ENCODE measurements at regions of chr3 and their contacts with region 1.

Region 1: GRCh38 chr3:167497903-167498302 is 24.1 kb upstream of the SERPINI2 start:
- DNase-seq: no peak
- ATAC-seq: no peak
- H3K4me3 ChIP-seq: no peak overlapping the region
- H3K27ac ChIP-seq: no peak overlapping the region
- H3K4me1 ChIP-seq: no peaks in the 10 kb centered on the region
- H3K27me3 ChIP-seq: no peaks in the 10 kb centered on the region; a peak in 1 of 4 replicates
- CTCF ChIP-seq: no peak
- EP300 ChIP-seq: no peak
- POLR2A ChIP-seq: no peak
- RAD21 ChIP-seq: no peak

Region 2: DNA sequence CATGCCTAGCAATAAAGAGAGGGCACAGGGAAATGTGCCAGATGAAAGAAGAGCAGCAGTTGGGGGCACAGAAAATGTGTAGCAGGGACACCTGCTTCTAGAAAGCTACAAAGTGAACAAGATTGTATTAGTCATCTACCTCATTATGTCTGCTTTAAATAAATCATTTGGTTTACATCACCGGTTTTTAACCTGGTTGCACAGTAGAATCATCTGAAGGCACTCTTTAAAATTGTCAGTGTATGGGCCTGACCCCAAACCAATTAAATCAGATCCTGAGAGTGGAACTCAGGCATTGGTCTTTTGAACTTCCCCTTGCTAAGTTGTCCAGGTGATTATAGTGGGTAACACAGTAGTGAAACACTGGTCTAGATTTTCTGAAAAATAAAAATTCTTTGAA is 191.6 kb before region 1 on chr3:
- CTCF ChIA-PET with region 1: no interaction called
- POLR2A ChIA-PET with region 1: no interaction called
- RAD21 ChIA-PET with region 1: no interaction called
- SMC1A ChIA-PET with region 1: no interaction called
- in situ Hi-C with region 1: no loop called
- intact Hi-C with region 1: no loop called
- DNase-seq: no peak
- ATAC-seq: no peak
- H3K4me3 ChIP-seq: no peak overlapping the region
- H3K27ac ChIP-seq: no peak overlapping the region
- H3K4me1 ChIP-seq: no peaks in the 10 kb centered on the region
- H3K27me3 ChIP-seq: no peaks in the 10 kb centered on the region
- CTCF ChIP-seq: no peak
- EP300 ChIP-seq: no peak
- POLR2A ChIP-seq: no peak
- RAD21 ChIP-seq: no peak

Region 3: GRCh38 chr3:167539849-167540248 is 41.9 kb after region 1 on chr3:
- CTCF ChIA-PET with region 1: no interaction called
- POLR2A ChIA-PET with region 1: interaction called, 10 read pairs
- RAD21 ChIA-PET with region 1: no interaction called
- SMC1A ChIA-PET with region 1: no interaction called
- in situ Hi-C with region 1: no loop called
- intact Hi-C with region 1: no loop called
- DNase-seq: no peak
- ATAC-seq: no peak
- H3K4me3 ChIP-seq: no peak overlapping the region
- H3K27ac ChIP-seq: no peak overlapping the region
- H3K4me1 ChIP-seq: no peaks in the 10 kb centered on the region
- H3K27me3 ChIP-seq: no peaks in the 10 kb centered on the region
- CTCF ChIP-seq: no peak
- EP300 ChIP-seq: no peak
- POLR2A ChIP-seq: no peak
- RAD21 ChIP-seq: no peak

Measured in GM12878 (cell line).